GM10248 (cell line): ENCODE measurements at regions of chr13 and their contacts with region 1.

Region 1: DNA sequence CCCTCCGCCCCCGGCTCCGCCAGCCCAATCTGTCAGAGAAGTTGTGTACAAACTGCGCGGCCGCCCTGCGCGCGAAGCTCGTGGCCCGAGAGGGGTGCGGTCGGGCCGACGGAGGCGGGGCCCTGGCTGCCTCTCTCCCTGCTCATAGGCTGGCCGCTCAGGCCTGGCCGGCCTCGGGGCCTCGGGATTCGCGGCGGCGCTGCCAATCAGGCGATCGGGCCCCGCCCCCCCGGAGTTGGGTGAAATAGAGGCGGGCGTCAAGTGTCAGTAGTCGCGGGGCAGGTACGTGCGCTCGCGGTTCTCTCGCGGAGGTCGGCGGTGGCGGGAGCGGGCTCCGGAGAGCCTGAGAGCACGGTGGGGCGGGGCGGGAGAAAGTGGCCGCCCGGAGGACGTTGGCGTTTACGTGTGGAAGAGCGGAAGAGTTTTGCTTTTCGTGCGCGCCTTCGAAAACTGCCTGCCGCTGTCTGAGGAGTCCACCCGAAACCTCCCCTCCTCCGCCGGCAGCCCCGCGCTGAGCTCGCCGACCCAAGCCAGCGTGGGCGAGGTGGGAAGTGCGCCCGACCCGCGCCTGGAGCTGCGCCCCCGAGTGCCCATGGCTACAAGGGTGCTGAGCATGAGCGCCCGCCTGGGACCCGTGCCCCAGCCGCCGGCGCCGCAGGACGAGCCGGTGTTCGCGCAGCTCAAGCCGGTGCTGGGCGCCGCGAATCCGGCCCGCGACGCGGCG is at the start of gene KLF5:
- DNase-seq: peak; percentile 99
- CTCF ChIP-seq: no peak

Region 2: DNA sequence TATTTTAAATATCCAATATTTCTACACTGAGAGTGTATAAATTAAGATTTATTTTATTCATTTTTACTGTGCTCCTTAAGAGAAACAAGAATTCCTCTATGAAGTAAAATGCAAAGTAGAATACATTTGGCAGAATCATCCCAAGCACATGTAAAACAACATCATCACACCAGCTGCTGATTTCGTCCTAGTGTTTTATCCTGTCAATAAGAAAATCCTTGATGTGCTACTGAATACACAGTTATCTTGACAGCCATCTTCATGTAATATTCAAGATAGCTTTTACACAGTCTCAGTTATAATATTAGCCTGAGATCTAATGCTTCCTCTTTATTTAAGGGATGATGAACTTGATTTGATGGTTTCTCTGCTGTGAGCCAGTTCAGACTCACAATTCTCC is 613.9 kb before region 1 on chr13:
- CTCF ChIA-PET with region 1: no interaction called
- POLR2A ChIA-PET with region 1: no interaction called
- DNase-seq: no peak
- CTCF ChIP-seq: no peak

Region 3: DNA sequence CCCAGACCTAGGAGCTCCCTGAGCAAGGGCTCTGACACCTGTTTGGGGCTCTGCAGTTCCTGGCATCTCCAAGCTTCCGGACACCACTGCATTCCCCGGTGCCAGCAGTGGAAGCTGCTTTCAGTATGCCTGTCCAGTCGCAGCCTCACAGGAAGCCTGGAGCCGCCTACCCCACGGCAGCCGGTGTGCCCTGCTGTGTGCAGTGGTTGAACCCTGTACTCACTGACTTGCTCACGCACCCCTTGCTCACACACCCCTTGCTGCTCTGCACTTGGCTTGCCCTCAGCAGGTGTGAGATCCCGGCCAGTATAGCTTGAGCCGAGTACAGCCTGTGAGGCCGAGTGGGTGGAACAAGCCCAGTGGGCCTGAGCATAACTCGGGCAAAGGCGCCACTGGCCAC is 206.7 kb before region 1 on chr13:
- CTCF ChIA-PET with region 1: no interaction called
- POLR2A ChIA-PET with region 1: interaction called, 12 read pairs
- DNase-seq: no peak
- CTCF ChIP-seq: no peak

Region 4: DNA sequence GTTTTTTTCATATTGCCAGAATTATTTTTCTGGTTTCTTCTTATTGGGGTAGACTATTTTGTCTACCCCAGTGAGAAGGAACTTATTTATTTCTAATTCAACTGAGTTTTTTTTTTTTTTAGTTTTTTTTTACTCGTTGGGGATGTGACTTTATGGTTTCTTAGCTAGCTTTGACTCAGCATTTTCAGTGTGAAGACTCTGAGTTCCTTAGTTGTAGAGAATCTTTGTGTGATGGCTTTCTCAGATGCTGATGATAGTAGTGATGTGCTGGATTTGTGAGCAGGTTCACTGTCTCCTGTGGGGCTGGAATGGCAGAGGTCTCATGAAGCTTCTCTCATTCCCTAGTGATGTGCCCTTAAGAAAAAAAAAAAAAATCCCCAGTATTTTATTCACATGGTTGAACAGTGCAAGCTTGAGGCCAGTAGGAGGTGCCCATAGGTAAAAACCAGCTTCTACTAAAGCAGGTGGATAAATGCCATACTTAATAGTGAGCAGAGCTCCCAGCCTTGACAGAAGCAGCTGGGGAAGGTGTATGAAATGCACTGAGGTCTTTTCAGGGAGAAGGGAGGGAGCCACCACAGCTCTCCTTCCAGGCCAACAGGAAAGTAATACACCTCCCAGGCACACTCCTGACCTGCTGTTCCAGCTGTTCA is 106.2 kb before region 1 on chr13:
- CTCF ChIA-PET with region 1: no interaction called
- POLR2A ChIA-PET with region 1: no interaction called
- DNase-seq: no peak
- CTCF ChIP-seq: no peak

Region 5: GRCh38 chr13:73073050-73073449 is 14.2 kb after region 1 on chr13:
- CTCF ChIA-PET with region 1: interaction called, 16 read pairs
- POLR2A ChIA-PET with region 1: interaction called, 3 read pairs
- DNase-seq: no peak
- CTCF ChIP-seq: no peak